ENCODE measurements at regions of chr2 and their contacts with region 1.

Region 1: DNA sequence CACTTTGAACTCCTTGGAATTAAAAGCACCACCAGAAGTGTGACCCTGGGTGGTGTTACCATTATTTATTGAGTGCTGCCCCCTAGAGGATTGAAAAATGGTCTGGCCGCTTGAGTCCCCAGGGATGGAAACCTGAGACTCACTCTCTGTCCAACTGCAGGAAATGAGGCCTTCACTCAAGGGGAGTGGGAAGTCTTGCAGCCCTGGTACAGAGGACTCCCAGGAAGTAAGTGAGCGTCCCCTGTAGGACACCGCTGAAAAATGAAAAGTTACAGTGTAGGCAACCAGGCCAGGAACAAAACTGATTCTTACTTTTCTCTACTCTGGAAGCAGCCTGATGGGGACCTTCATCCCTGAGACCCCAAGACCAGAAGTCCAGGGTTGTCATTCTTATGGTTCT is 2.2 kb upstream of the NRP2 start:
- DNase-seq: peak; percentile 88
- H3K4me3 ChIP-seq: no peak overlapping the region
- H3K27ac ChIP-seq: no peak overlapping the region
- H3K4me1 ChIP-seq: peaks cover 30% of the 10 kb centered on the region
- CTCF ChIP-seq: peak; percentile 92

Region 2: DNA sequence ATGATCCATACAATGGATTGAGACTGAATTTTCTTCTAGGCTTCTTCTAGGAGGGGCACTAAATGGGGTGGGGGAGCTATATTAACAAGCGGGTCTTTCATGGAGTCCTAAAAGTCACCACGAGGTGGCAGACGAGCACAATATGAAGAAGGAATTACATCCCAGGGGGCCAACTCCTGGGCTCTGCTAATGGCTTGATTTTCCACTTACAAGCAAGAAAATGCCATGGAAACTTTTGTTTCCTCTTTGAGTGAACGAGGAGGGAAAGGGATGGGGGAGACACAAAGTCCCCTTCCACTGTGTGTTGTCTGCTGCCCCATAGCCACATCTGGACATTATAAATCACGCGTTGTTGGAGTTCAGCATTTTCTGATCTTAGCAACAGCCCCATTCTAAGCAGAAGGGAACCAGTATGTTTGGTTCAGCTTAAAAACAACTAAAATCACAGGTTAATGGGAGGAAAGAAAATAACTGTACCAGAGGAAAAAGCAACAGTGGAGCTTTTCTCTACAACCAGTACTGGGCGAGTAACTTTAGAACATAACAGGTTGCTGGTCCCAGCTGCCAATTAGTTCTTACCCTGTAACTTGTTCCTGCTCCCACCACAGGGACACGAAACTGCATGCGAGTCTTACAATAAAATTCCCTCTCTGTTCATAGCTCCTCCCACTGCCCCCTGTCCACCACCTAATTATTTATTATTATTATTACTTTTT is 1419.7 kb before region 1 on chr2:
- CTCF ChIA-PET with region 1: interaction called, 3 read pairs
- POLR2A ChIA-PET with region 1: no interaction called
- intact Hi-C with region 1: loop called (anchors 2 kb)
- DNase-seq: peak; percentile 56
- H3K4me3 ChIP-seq: no peak overlapping the region
- H3K27ac ChIP-seq: no peak overlapping the region
- H3K4me1 ChIP-seq: no peaks in the 10 kb centered on the region
- CTCF ChIP-seq: peak; percentile 90

Region 3: DNA sequence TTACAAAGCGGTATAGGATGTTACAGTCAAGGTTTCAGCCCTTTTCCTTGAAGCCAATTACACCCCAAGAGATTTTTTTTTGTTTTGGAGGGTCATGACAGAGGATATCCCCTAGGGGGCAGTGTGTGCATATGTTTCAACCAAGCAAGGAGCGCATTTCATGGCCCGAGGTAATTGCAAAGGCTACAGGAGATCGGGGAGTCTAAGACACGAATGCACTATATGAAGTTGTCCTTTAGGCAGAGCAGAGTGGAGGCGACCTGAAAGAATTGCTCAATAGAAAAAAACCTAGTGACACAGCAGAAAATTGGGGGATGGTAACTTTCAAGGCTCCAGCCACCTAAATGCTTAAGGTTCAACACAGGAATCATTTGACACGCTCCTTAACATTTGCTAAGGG is 1354.6 kb before region 1 on chr2:
- CTCF ChIA-PET with region 1: no interaction called
- POLR2A ChIA-PET with region 1: no interaction called
- intact Hi-C with region 1: loop called (anchors 2 kb)
- DNase-seq: peak; percentile 64
- H3K4me3 ChIP-seq: no peak overlapping the region
- H3K27ac ChIP-seq: no peak overlapping the region
- H3K4me1 ChIP-seq: no peaks in the 10 kb centered on the region
- CTCF ChIP-seq: peak; percentile 96

Region 4: DNA sequence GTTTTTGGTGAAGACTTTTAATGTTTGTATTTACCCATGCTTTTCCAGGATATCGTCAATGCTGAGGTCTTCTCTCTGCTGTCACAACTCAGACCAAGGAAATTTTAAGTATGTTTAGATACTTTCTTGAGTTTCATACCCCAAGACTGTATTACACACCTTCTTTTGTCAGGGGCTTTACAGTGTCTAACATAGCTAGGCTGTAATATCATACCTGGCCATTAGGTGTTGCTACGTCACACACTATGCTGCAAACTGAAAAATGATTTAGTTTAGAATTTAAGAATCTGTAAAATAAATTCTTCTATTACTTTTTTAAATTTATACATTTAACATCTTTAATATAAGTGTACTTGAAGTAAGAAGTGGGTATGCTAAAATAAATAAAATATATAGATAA is 356.1 kb before region 1 on chr2:
- CTCF ChIA-PET with region 1: no interaction called
- POLR2A ChIA-PET with region 1: interaction called, 3 read pairs
- intact Hi-C with region 1: loop called (anchors 10 kb)
- DNase-seq: peak; percentile 1
- H3K4me3 ChIP-seq: no peak overlapping the region
- H3K27ac ChIP-seq: no peak overlapping the region
- H3K4me1 ChIP-seq: no peaks in the 10 kb centered on the region
- CTCF ChIP-seq: peak; percentile 65

Region 5: DNA sequence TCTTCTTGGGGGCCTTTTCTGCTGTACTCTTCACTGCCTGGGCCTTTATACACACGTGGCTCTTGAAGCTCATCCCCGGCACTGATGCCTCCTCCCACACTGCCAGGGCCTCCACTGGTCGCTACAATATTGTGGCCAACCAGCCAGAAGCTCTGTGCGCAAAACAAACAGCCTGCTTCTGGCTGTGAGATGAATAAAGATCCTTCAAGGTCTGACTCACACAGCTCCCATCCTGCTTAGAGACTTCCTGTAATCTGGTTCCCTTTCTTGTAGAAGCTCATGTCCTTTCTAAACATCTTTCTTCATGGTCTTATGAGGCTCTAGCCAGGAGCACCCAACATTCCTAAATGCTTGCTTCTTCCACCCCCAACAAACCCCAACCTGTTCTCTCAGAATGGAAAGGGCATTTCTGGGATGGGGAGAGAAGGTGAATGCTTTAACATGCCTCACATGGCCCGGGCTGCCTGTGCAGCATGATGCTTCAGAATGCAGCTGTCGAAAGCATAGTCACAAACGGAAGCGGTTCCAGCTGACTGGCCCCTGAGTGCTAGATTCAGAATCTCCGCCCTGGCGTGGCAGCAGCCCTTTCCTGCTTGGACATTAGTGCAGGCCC is 26.8 kb after region 1 on chr2:
- CTCF ChIA-PET with region 1: no interaction called
- POLR2A ChIA-PET with region 1: interaction called, 8 read pairs
- intact Hi-C with region 1: loop called (anchors 1 kb)
- DNase-seq: peak; percentile 88
- H3K4me3 ChIP-seq: peak overlapping the region; percentile 41
- H3K27ac ChIP-seq: peak overlapping the region; percentile 80
- H3K4me1 ChIP-seq: peaks cover 37% of the 10 kb centered on the region
- CTCF ChIP-seq: no peak